ENCODE measurements at regions of chr10 and their contacts with region 1.

Region 1: DNA sequence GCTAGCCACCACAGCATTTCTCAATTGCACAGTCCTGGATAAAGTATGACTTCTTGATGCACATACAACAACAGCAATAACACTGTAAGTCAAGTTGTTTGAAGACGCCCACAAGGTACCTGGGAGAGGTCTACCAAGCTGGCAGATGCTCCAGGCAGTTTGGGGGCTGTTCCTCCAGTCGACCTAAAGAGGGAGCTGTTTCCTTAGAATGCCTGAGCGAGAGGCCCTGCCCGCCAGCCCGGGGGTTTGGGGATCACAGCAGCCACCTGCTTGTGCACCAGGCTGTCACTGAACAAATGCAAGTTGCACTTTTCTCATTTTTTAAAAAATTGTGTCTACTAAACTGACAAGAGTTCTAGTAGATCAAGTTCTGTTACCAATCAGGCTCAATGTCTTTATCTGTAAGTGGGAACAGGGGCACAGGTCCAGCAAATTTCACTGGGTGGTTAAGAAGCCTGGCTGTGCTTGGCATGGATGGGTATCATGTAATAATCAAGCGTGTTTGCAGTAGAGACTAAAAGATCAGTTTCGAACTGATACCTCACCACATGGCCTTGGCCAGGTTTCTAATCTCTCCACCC is 193.8 kb upstream of the ADO start:
- DNase-seq: peak; percentile 88
- CTCF ChIP-seq: peak; percentile 86

Region 2: DNA sequence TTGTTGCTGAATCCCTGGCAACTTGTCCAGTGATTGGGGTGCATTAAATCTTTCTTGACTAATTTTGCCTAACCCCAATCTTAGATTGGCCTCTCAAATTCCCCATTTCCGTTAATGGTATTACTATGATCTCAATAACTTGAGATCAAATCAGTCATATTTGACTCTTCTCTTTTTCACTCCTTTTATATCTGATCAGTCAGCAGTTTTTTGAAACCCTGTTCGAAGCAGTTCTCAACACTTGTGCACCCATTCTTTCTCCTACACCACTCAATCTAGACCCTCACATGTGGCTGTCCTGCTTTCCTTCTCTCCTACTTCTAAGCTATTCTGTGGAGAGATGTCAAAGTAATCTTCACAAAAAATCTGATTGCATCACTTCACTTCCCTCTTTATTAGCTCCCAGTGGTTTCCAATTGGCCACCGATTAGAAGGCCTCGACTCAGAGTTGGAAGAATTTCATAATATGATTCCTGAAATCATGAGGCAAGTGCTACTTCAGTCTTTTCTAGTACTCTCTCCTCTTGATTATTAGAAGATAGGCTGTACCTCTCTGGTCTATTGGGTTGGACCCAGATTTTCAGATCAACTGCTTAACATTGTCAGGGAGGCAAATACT is 107.6 kb before region 1 on chr10:
- CTCF ChIA-PET with region 1: no interaction called
- POLR2A ChIA-PET with region 1: no interaction called
- DNase-seq: no peak
- CTCF ChIP-seq: no peak

Region 3: GRCh38 chr10:62545160-62546066 is 65.3 kb before region 1 on chr10:
- CTCF ChIA-PET with region 1: no interaction called
- POLR2A ChIA-PET with region 1: no interaction called
- DNase-seq: no peak
- CTCF ChIP-seq: no peak

Region 4: GRCh38 chr10:62594093-62594520 is 16.6 kb before region 1 on chr10:
- CTCF ChIA-PET with region 1: interaction called, 46 read pairs
- POLR2A ChIA-PET with region 1: no interaction called
- DNase-seq: peak; percentile 54
- CTCF ChIP-seq: peak; percentile 98

Region 5: DNA sequence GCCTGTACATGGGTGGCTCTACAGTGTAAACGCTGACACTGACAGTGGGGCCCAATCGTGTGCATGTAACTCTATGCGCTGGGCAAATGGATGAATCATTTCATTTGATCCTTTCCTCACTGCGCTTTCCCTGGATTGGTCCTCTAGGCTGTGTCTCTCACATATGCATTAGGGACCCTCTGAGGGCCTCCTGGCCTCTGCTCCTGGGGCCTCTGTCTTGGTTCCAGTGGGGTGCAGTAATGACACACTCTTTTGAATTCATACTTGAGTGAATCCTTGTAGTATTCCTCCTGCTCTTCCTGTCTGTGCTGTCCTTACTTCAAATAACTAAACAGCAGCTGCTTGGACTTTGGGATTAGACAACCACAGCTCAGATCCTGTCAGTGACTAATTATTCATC is 17.2 kb after region 1 on chr10:
- CTCF ChIA-PET with region 1: interaction called, 89 read pairs
- POLR2A ChIA-PET with region 1: no interaction called
- DNase-seq: no peak
- CTCF ChIP-seq: no peak

Region 6: GRCh38 chr10:62637249-62638061 is 26.7 kb after region 1 on chr10:
- CTCF ChIA-PET with region 1: interaction called, 89 read pairs
- POLR2A ChIA-PET with region 1: no interaction called
- DNase-seq: peak; percentile 26
- CTCF ChIP-seq: no peak

Region 7: GRCh38 chr10:62653254-62653653 is 42.5 kb after region 1 on chr10:
- CTCF ChIA-PET with region 1: interaction called, 20 read pairs
- POLR2A ChIA-PET with region 1: no interaction called
- DNase-seq: peak; percentile 68
- CTCF ChIP-seq: no peak

Region 8: GRCh38 chr10:62732841-62733653 is 122.3 kb after region 1 on chr10:
- CTCF ChIA-PET with region 1: interaction called, 16 read pairs
- POLR2A ChIA-PET with region 1: no interaction called
- DNase-seq: peak; percentile 64
- CTCF ChIP-seq: no peak

Measured in GM10248 (cell line).